Activated CD4-positive, alpha-beta T cell treated with anti-CD3 and anti-CD28 coated beads, Interleukin-2, amount 10 ng/mL, durations not matched to agents 24 days and 14 days (primary cell): ENCODE measurements at regions of chr15 and their contacts with region 1.

Region 1: DNA sequence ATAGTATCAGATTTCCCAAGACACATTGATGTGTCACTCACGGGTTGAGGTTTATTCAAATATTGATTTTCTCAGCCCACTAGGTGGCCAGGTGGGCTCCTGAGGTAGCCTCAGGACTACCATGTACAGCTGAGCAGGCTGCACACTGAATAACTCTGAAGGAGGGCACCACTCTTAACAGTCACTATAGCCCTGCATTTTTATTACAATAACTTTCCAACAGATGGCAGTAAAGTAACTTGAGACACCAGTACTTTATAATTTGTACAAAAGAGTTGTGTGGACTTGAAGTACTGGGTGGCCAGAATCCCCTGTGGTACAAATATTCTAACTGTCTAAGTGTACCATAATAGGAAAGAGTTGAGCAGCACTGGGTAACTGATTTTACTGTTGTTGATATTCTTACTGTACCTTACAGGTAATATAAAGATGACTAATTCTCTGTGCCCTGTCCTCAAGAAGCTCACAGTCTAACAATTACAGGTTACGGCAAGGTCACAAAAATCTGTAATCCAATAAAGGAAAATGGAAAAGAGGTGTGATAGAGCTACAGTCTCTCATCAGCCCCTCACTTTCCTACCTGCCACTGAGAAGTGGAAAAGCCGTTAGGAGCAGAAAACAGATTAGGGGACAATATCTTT is 76.0 kb downstream of the ETFA start:
- DNase-seq: no peak
- H3K4me3 Mint-ChIP-seq: no peak overlapping the region
- H3K27ac Mint-ChIP-seq: no peak overlapping the region
- H3K4me1 Mint-ChIP-seq: no peaks in the 10 kb centered on the region
- H3K27me3 Mint-ChIP-seq: no peaks in the 10 kb centered on the region

Region 2: DNA sequence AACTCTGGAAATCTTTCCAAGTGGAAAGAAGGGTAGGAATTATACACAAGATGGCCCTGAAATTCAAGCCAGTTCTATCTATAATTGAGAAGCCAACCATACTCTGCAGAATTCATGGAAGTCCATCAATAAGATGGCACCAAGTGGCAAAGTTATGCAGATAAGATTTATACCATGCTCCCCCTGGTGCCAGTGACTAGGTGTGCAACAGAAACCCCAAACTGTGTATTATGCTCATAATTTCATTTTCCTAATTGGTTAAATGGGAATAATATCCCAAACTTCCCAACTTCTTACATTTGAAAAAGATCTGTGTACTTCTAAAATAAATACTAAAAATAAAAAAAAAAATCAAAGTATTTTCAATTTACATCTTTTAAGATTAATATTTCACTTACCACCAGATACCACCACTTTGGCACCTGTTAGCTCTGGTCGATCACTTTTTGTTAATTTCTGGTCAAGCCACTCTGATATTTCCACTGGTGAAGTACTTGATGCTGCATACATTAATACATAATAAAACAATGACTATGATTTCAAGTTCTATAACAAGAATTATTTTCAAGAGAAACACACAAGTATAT is 50.0 kb after region 1 on chr15:
- intact Hi-C with region 1: loop called (anchors 10 kb)
- DNase-seq: no peak
- H3K4me3 Mint-ChIP-seq: no peak overlapping the region
- H3K27ac Mint-ChIP-seq: no peak overlapping the region
- H3K4me1 Mint-ChIP-seq: peaks cover 17% of the 10 kb centered on the region
- H3K27me3 Mint-ChIP-seq: no peaks in the 10 kb centered on the region

Region 3: GRCh38 chr15:76840830-76841460 is 605.6 kb after region 1 on chr15:
- intact Hi-C with region 1: loop called (anchors 1 kb)
- DNase-seq: no peak
- H3K4me3 Mint-ChIP-seq: no peak overlapping the region
- H3K27ac Mint-ChIP-seq: no peak overlapping the region
- H3K4me1 Mint-ChIP-seq: peaks cover 5% of the 10 kb centered on the region
- H3K27me3 Mint-ChIP-seq: no peaks in the 10 kb centered on the region

Region 4: DNA sequence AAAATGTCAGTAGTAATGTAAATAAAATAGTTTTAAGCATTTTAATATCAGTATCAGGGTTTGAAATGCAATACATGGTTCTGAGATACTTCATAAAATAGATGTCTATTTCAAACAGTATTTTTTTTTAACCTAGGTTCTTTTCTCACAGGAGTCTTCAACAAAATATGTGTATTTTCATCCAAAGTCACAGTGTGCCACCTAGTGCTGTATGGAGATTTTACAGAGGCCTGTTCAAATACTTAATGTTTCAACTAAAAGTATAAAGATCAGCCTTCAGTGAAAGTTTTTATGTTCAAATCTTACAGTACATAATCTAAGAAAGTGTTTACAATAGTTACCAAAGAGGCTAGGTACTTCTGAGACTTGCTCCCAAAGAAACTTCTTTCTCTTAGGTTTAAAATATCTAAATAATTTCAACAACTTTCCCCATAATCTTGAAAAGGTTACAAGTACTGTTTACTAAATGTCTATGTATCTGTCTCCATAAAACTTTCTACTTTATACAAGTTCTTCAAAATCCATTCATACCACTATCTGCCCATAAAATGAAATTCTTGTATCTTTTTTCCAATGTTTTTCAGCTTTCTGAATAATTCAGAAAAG is 631.5 kb after region 1 on chr15:
- intact Hi-C with region 1: loop called (anchors 2 kb)
- DNase-seq: peak; percentile 68
- H3K4me3 Mint-ChIP-seq: no peak overlapping the region
- H3K27ac Mint-ChIP-seq: no peak overlapping the region
- H3K4me1 Mint-ChIP-seq: peaks cover 22% of the 10 kb centered on the region
- H3K27me3 Mint-ChIP-seq: no peaks in the 10 kb centered on the region